ENCODE measurements at regions of chr22 and their contacts with region 1.

Region 1: DNA sequence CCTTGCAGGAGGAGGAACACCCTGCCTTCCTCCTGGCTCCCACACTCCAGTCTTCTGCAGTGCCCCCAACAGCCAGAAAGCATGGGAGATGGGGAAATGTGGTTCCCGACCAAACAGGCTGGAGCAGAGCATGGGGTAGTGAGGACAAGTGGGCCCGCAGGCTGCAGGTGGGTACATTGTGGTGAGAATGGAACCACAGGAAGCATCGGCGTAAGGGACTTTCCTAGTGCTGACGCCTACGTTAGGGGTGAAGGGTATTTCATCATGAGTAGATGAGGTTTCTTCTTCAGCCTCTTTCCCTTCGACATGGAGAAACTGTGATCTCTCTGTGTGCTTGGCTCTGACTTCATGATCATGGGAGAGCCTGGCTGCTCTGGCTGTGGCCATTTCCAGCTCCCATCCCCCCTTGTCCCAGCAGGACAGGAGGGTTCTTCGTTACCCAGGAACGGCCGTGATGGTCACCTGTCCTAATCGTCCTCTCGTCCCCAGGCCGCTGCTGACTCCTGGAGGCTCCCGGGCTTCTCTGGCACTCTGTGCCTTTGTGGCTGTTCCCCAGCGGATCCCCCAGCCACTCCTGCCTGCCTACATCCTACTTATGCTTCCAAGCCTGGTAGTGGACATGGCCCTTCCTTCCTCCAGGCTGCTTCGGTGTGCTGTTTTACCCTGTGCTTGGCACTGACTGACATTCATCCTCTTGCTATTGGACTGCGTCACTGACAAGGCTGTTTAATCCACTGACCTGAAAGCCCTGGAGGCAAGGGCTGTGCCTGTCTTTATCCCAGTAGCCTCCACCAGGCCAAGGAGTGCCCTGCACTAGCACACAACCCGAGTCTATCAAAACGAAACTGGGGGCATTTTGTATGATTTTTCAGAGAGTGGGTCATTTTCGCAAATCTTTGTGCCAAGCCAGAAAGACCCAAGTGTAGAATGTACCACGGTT is 65.2 kb upstream of the CECR2 start:
- DNase-seq: peak; percentile 77
- H3K4me3 Mint-ChIP-seq: peak overlapping the region; percentile 60
- H3K27ac Mint-ChIP-seq: peak overlapping the region; percentile 88
- H3K4me1 Mint-ChIP-seq: peaks cover 51% of the 10 kb centered on the region
- H3K27me3 Mint-ChIP-seq: peaks cover 4% of the 10 kb centered on the region

Region 2: DNA sequence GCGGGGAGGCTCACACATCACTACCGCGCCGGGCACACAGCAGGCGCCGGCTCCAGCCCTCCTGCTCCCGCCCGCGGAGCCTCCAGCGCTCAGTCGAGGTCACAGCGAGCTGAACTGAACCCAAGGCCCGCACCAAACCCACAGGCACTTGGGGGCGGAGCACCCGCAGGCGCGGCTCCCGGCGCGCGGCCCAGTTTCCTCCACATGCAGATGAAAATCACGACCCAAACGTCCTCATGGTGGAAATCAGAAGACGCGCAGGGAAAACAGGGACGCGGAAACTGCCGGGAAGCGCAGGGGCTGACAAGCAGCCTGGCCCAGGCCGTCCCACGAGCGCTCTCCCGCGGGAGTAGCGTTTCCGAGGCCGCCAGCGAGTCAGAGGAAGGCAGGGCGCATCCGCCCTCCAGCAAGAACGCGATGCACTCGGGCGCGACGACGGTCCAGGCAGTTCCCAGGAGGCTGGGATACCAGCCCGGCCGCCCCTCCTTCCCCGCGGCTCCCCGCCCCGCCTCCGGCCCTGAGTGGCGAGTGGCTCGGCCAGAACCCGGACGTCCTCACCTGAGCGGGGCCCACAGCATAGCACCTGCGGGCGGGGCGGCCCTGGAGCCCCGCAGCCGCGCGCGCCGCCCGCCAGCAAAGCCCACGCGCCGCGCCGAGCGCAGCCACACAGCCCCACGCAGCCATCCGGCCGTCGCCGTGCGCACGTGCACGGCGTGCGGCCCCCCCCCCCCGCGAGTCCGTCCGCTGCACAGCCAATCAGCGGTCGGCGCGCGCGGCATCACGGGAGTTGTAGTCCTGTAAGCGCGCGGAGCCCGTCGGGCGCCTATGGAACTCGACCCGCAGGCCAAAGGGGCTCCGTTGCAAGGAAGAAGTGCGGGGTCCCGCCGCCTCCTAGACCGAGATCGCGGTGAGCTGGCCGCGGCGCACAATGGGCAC is 145.3 kb before region 1 on chr22 and contains the start of gene HDHD5:
- intact Hi-C with region 1: loop called (anchors 2 kb)
- DNase-seq: peak; percentile 78
- H3K4me3 Mint-ChIP-seq: peak within 1 kb of the TSS; percentile 88
- H3K27ac Mint-ChIP-seq: peak within 1 kb of the TSS; percentile 75
- H3K4me1 Mint-ChIP-seq: peaks cover 25% of the 10 kb centered on the region
- H3K27me3 Mint-ChIP-seq: no peaks in the 10 kb centered on the region
- total RNA-seq, gene HDHD5: 39.1 and 42.1 TPM in 2 replicates

Region 3: GRCh38 chr22:17171313-17172171 is 132.6 kb before region 1 on chr22:
- intact Hi-C with region 1: loop called (anchors 1 kb)
- DNase-seq: peak; percentile 73
- H3K4me3 Mint-ChIP-seq: peak overlapping the region; percentile 88
- H3K27ac Mint-ChIP-seq: peak overlapping the region; percentile 78
- H3K4me1 Mint-ChIP-seq: peaks cover 5% of the 10 kb centered on the region
- H3K27me3 Mint-ChIP-seq: peaks cover 9% of the 10 kb centered on the region

Region 4: DNA sequence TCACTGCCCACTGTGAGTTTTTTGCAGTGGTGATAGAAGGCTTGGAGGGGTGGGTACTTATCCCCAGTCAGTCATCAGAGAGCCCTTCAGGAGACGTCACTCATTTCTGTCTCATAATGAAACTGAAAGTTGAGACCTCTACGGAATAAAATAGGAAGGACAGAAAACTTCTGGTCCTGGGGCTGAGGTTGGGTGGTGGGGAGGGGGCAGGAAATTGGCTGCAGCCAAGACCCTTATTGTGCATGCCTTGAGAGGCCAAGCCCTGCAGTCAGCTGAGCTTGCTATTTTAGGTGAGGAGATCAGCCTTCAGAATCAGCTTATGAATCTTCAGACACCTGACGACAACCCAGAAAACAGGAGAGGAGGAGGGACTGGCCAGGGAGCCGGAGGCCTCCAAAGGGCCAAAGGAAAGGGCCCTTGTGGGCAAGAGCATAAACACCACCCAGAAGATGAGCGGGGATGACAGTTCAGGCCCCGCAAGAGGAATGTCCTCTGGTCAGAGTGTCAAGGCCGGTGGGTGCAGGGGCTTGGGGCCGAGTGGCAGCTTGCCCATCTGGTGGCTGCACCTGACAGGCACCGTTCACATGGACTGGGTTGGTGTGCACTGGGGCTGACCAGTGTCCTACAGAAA is 67.0 kb before region 1 on chr22:
- intact Hi-C with region 1: loop called (anchors 5 kb)
- DNase-seq: peak; percentile 52
- H3K4me3 Mint-ChIP-seq: peak overlapping the region; percentile 81
- H3K27ac Mint-ChIP-seq: peak overlapping the region; percentile 76
- H3K4me1 Mint-ChIP-seq: peaks cover 21% of the 10 kb centered on the region
- H3K27me3 Mint-ChIP-seq: no peaks in the 10 kb centered on the region

Region 5: DNA sequence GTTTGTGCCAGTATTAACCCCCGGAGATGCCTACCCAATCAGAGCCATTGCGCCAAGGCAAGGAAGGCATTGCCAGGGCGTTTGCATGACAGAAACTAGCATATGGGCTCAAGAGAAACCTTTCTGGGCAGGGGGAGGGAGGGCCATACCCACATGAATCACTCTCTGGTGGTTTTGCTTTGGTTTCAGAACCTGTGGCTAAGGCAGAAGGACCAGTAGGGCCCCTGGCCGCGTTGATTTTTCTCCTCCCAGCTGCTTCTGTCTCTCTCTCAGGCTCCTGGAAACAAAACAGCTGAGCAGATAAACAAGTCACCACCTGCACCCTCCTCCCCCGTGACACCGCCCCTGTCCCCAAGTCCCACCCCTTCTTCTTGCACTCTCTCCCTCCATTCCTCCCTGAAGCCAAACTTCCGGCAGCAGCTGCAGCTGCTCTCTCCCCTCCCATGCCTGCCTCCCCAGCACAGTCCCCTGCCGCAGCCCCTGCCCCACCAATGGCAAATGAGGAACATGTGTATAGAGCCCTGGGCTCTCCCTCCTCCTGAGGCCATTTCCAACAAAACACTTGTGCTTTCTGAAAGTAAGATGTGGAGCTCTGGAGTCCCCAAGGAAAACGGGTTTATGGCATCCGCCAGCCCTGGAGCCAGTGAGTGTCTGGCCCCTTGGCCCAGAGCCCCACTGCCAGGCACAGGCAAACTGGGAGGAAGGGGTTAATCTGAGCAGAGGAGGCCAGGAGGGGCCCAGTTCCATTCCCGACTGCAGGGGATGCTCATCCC is 45.9 kb before region 1 on chr22:
- intact Hi-C with region 1: loop called (anchors 1 kb)
- DNase-seq: peak; percentile 68
- H3K4me3 Mint-ChIP-seq: peak overlapping the region; percentile 40
- H3K27ac Mint-ChIP-seq: peak overlapping the region; percentile 63
- H3K4me1 Mint-ChIP-seq: peaks cover 35% of the 10 kb centered on the region
- H3K27me3 Mint-ChIP-seq: peaks cover 16% of the 10 kb centered on the region

Region 6: GRCh38 chr22:17281440-17281841 is 22.7 kb before region 1 on chr22:
- intact Hi-C with region 1: loop called (anchors 1 kb)
- DNase-seq: peak; percentile 51
- H3K4me3 Mint-ChIP-seq: peak overlapping the region; percentile 77
- H3K27ac Mint-ChIP-seq: peak overlapping the region; percentile 97
- H3K4me1 Mint-ChIP-seq: peaks cover 31% of the 10 kb centered on the region
- H3K27me3 Mint-ChIP-seq: peaks cover 6% of the 10 kb centered on the region

Region 7: GRCh38 chr22:17471886-17472535 is 167.9 kb after region 1 on chr22:
- intact Hi-C with region 1: no loop called
- DNase-seq: no peak
- H3K4me3 Mint-ChIP-seq: no peak overlapping the region
- H3K27ac Mint-ChIP-seq: no peak overlapping the region
- H3K4me1 Mint-ChIP-seq: no peaks in the 10 kb centered on the region
- H3K27me3 Mint-ChIP-seq: peaks cover 23% of the 10 kb centered on the region

Region 8: GRCh38 chr22:17773606-17774205 is 469.6 kb after region 1 on chr22:
- intact Hi-C with region 1: loop called (anchors 10 kb)
- DNase-seq: peak; percentile 67
- H3K4me3 Mint-ChIP-seq: peak overlapping the region; percentile 79
- H3K27ac Mint-ChIP-seq: peak overlapping the region; percentile 65
- H3K4me1 Mint-ChIP-seq: peaks cover 63% of the 10 kb centered on the region
- H3K27me3 Mint-ChIP-seq: peaks cover 14% of the 10 kb centered on the region

Measured in activated T-helper 1 cell treated with anti-CD3 and anti-CD28 coated beads, Interleukin-12 subunit alpha, Interleukin-12 subunit beta, Interleukin-2, Interleukin-4 antibody, amounts not matched to agents 30 ng/mL and 10 ng/mL and 1 ng/mL, durations not matched to agents 14 hours and 24 hours and 36 hours (primary cell).